Activated CD4-positive, alpha-beta memory T cell treated with anti-CD3 and anti-CD28 coated beads for 36 hours (primary cell): ENCODE measurements at regions of chr9 and their contacts with region 1.

Region 1: GRCh38 chr9:33816327-33817252 is at the start of gene UBE2R2:
- DNase-seq: peak; percentile 96
- H3K4me3 Mint-ChIP-seq: peak within 1 kb of the TSS; percentile 82
- H3K27ac Mint-ChIP-seq: peak within 1 kb of the TSS; percentile 93
- H3K4me1 Mint-ChIP-seq: peaks cover 51% of the 10 kb centered on the region
- H3K27me3 Mint-ChIP-seq: no peaks in the 10 kb centered on the region
- total RNA-seq, gene UBE2R2: 42.3 to 43.9 TPM

Region 2: DNA sequence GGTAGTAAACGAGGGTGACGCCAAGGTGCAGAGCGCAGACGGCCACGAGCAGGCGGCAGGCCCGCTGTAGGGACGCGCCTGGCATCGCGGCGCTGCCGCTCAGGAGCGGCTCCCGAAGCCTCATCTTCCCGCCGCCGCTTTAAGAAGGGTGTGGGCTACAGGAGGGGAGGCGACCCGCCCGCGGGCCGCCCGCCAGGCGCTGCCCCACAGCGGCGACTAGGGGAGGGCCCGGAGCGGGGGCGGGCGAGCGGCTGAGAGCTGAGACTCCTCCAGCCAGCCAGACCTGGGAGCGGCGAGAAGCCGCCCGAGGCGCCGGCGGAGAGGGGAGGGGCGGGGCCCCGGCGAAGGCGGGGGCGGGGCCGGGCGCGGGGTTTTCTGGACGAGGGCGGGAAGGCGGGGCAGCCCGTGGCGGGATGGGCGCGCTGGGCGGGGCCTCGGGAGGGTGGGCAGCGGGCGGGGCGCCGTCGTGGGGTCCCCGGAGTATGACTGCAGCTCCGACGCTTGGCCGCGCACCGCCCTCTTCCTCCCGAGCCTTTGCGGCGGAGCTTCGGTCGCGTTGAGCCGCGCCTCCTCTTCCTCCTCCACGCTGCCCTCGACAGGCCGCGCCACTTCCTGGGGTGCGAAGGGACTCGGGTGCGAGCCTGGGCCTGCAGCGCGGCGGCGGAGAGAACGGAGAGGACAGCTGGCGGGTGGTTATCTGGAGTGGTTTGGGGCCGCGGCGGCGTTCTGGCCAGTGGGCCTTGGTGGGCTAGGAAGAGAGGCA is 649.4 kb before region 1 on chr9 and contains the start of gene B4GALT1:
- CTCF ChIA-PET with region 1: no interaction called
- POLR2A ChIA-PET with region 1: no interaction called
- intact Hi-C with region 1: loop called (anchors 5 kb)
- DNase-seq: peak; percentile 98
- H3K4me3 Mint-ChIP-seq: peak within 1 kb of the TSS; percentile 95
- H3K27ac Mint-ChIP-seq: peak within 1 kb of the TSS; percentile 97
- H3K4me1 Mint-ChIP-seq: peaks cover 48% of the 10 kb centered on the region
- H3K27me3 Mint-ChIP-seq: no peaks in the 10 kb centered on the region
- total RNA-seq, gene B4GALT1: 76.6 to 78.0 TPM

Region 3: DNA sequence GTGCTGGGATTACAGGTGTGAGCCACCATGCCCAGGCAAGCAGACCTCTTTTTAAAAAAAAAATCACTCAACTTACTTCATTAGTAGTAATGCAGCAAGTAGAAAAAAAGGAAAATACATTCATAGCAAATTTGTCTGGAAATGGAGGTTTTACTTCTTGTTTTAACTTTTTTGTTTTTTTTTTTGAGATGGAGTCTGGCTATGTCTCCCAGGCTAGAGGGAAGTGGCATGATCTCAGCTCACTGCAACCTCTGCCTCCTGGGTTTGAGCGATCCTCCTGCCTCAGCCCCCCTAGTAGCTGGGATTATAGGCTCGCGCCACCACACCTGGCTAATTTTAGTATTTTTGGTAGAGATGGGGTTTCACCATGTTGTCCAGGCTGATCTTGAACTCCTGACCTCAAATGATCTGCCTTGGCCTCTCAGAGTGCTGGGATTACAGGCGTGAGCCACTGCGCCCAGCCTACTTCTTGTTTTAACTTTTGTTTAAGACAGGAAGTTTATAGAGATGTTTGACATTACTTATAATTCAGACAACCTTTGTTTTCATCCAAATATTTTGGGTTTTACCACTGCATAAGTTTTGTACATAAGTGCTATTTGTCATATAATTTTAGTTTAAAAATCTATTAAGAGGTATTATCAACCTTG is 26.8 kb after region 1 on chr9:
- CTCF ChIA-PET with region 1: interaction called, 97 read pairs
- POLR2A ChIA-PET with region 1: no interaction called
- intact Hi-C with region 1: no loop called
- DNase-seq: no peak
- H3K4me3 Mint-ChIP-seq: no peak overlapping the region
- H3K27ac Mint-ChIP-seq: no peak overlapping the region
- H3K4me1 Mint-ChIP-seq: peaks cover 38% of the 10 kb centered on the region
- H3K27me3 Mint-ChIP-seq: no peaks in the 10 kb centered on the region

Region 4: DNA sequence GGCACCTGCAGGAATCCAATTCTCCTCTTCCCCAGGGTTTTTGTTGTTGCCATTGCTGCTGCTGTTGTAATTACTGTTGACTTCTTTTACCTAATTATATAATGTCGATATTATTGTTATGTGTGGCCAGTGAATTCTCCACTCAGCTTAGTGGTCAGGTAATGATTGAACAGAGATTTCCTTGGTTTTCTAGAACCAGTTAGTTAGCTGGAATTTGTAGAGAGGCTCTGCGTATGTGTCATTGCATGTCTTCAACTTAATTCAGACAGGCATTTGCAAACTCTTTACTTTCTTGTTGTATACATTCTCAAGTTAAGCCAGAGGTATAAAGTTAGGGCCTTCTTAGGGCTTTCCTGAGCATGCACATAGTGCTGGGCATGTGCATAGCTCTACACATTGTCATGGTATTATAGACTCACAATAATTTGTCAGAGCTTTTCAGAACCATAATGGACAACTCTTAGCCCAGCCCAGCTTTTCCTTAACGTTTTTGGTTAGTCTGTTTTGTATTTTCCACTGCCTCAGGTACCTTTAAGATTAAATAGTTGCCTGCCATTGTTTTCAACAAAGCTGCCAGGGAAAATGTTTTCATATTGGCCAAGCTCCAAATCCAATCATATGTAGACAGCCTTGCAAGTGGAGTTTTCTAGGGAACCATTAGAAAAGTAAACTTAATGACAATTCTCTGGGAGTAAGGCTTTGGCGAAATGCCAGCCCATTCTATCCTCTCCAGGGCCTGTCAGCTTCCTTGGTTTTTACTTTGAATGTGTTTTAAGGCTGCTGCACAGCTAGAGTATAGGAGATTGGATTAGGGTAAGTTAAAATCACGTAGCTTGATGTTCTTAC is 68.5 kb after region 1 on chr9:
- CTCF ChIA-PET with region 1: interaction called, 7 read pairs
- POLR2A ChIA-PET with region 1: interaction called, 3 read pairs
- intact Hi-C with region 1: loop called (anchors 2 kb)
- DNase-seq: no peak
- H3K4me3 Mint-ChIP-seq: no peak overlapping the region
- H3K27ac Mint-ChIP-seq: no peak overlapping the region
- H3K4me1 Mint-ChIP-seq: peaks cover 40% of the 10 kb centered on the region
- H3K27me3 Mint-ChIP-seq: no peaks in the 10 kb centered on the region

Region 5: GRCh38 chr9:34048923-34049697 is 232.5 kb after region 1 on chr9:
- CTCF ChIA-PET with region 1: no interaction called
- POLR2A ChIA-PET with region 1: interaction called, 7 read pairs
- intact Hi-C with region 1: loop called (anchors 1 kb)
- DNase-seq: peak; percentile 97
- H3K4me3 Mint-ChIP-seq: peak overlapping the region; percentile 89
- H3K27ac Mint-ChIP-seq: peak overlapping the region; percentile 99
- H3K4me1 Mint-ChIP-seq: peaks cover 32% of the 10 kb centered on the region
- H3K27me3 Mint-ChIP-seq: no peaks in the 10 kb centered on the region

Region 6: GRCh38 chr9:34126207-34127034 is 309.8 kb after region 1 on chr9 and contains the start of gene DCAF12:
- CTCF ChIA-PET with region 1: no interaction called
- POLR2A ChIA-PET with region 1: no interaction called
- intact Hi-C with region 1: loop called (anchors 5 kb)
- DNase-seq: peak; percentile 94
- H3K4me3 Mint-ChIP-seq: peak within 1 kb of the TSS; percentile 98
- H3K27ac Mint-ChIP-seq: peak within 1 kb of the TSS; percentile 94
- H3K4me1 Mint-ChIP-seq: peaks cover 35% of the 10 kb centered on the region
- H3K27me3 Mint-ChIP-seq: no peaks in the 10 kb centered on the region
- total RNA-seq, gene DCAF12: 32.5 to 35.4 TPM

Region 7: GRCh38 chr9:34328987-34329832 is 512.6 kb after region 1 on chr9 and contains the starts of genes KIF24 and NUDT2:
- CTCF ChIA-PET with region 1: no interaction called
- POLR2A ChIA-PET with region 1: no interaction called
- intact Hi-C with region 1: loop called (anchors 2 kb)
- DNase-seq: peak; percentile 98
- H3K4me3 Mint-ChIP-seq: peak within 1 kb of the TSS; percentile 97
- H3K27ac Mint-ChIP-seq: peak within 1 kb of the TSS; percentile 94
- H3K4me1 Mint-ChIP-seq: peaks cover 30% of the 10 kb centered on the region
- H3K27me3 Mint-ChIP-seq: no peaks in the 10 kb centered on the region
- total RNA-seq, gene KIF24: 5.6 to 5.7 TPM
- total RNA-seq, gene NUDT2: 42.4 to 43.3 TPM